Common myeloid progenitor, CD34-positive (primary cell): ENCODE measurements at regions of chr18 and their contacts with region 1.

Region 1: GRCh38 chr18:46104128-46104911 is at the start of gene HAUS1:
- DNase-seq: peak; percentile 55 to 67 (median 66)
- H3K4me3 ChIP-seq: peak within 1 kb of the TSS; percentile 80 to 100 (median 98)
- H3K27ac ChIP-seq: peak within 1 kb of the TSS in 1 of 2 experiments; percentile 76
- H3K4me1 ChIP-seq: peaks cover 5 to 10% (median 8%) of the 10 kb centered on the region in 4 experiments
- H3K27me3 ChIP-seq: no peaks in the 10 kb centered on the region

Region 2: GRCh38 chr18:46134920-46135675 is 30.8 kb after region 1 on chr18:
- CTCF ChIA-PET with region 1: no interaction called
- POLR2A ChIA-PET with region 1: interaction called, 10 read pairs
- DNase-seq: no peak
- H3K4me3 ChIP-seq: no peak overlapping the region
- H3K27ac ChIP-seq: no peak overlapping the region
- H3K4me1 ChIP-seq: peaks cover 0 to 4% (median 0%) of the 10 kb centered on the region in 4 experiments
- H3K27me3 ChIP-seq: no peaks in the 10 kb centered on the region

Region 3: DNA sequence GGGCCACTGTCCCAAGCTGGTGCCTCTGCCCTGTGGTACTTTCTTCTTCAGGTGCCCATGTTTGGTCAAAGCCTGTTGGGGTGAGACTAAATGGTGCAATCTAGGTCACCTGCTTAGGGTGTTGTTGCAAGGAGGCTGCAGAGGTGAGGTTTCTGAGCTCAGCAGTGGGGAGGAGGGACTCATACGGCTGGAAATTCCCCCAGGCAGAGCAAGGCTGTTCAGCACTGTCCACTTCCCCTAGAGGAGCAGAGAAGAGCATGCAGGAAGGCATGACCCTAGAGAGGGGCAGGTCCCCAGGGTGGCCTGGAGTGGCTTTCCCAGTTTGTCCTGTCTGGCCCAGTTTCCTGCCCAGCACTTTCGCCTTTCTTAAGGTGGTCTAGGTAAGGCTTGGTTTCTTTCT is 210.9 kb after region 1 on chr18:
- CTCF ChIA-PET with region 1: no interaction called
- POLR2A ChIA-PET with region 1: no interaction called
- DNase-seq: no peak
- H3K4me3 ChIP-seq: no peak overlapping the region
- H3K27ac ChIP-seq: no peak overlapping the region
- H3K4me1 ChIP-seq: no peaks in the 10 kb centered on the region
- H3K27me3 ChIP-seq: peaks cover 0 to 5% (median 0%) of the 10 kb centered on the region in 5 experiments

Region 4: GRCh38 chr18:46411867-46412690 is 307.8 kb after region 1 on chr18:
- CTCF ChIA-PET with region 1: no interaction called
- POLR2A ChIA-PET with region 1: no interaction called
- DNase-seq: no peak
- H3K4me3 ChIP-seq: no peak overlapping the region
- H3K27ac ChIP-seq: no peak overlapping the region
- H3K4me1 ChIP-seq: no peaks in the 10 kb centered on the region
- H3K27me3 ChIP-seq: peaks cover 0 to 8% (median 0%) of the 10 kb centered on the region in 5 experiments